ENCODE measurements at regions of chr1 and their contacts with region 1.

Region 1: DNA sequence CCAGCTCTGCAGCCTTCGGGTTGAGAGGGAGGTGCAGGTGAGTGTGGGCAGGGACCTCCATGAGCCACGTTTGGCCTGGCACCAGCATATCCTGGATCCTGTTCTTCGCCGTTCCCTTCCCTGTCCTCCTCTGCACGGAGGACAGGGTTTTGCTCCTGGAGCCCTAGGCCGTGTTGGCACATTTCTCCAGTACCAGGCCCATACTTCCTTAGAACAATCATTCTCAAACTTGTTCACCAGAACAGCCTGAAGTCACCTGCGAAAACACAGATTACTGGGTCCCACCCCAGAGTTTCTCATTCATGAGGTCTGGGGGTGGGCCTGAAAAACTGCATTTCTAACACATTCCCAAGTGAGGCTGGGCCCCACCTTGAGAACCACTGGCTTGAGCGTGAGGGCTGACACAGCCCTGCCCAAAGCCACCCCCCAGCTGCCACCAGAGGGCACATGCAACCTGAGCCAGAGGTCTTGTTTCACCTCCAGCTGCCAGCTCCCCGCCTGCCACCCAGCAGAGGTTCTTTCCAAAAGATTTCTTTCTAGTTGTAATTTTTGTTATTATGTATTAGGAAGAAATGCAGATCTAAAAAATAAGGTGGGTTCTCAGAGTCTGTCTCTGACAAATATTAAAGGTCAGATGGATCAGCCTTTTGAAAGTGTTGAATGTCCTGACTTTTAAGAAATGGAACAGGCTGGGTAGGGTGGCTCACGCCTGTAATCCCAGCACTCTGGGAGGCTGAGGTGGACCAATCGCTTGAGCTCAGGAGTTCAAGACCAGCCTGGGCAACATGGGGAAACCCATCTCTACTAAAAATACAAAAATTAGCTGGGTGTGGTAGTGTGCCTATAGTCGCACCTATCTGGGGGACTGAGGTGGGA is 39.6 kb upstream of the LDLRAP1 start:
- DNase-seq: no peak
- CTCF ChIP-seq: peak; percentile 41

Region 2: GRCh38 chr1:25239681-25240541 is 263.9 kb before region 1 on chr1:
- CTCF ChIA-PET with region 1: no interaction called
- POLR2A ChIA-PET with region 1: interaction called, 10 read pairs
- DNase-seq: peak; percentile 86
- CTCF ChIP-seq: peak; percentile 50

Region 3: GRCh38 chr1:25487628-25488027 is 16.2 kb before region 1 on chr1:
- CTCF ChIA-PET with region 1: interaction called, 29 read pairs
- POLR2A ChIA-PET with region 1: no interaction called
- DNase-seq: peak; percentile 31
- CTCF ChIP-seq: peak; percentile 46

Region 4: GRCh38 chr1:25520446-25521061 is 16.8 kb after region 1 on chr1:
- CTCF ChIA-PET with region 1: interaction called, 32 read pairs
- POLR2A ChIA-PET with region 1: interaction called, 7 read pairs
- DNase-seq: peak; percentile 72
- CTCF ChIP-seq: peak; percentile 75

Region 5: DNA sequence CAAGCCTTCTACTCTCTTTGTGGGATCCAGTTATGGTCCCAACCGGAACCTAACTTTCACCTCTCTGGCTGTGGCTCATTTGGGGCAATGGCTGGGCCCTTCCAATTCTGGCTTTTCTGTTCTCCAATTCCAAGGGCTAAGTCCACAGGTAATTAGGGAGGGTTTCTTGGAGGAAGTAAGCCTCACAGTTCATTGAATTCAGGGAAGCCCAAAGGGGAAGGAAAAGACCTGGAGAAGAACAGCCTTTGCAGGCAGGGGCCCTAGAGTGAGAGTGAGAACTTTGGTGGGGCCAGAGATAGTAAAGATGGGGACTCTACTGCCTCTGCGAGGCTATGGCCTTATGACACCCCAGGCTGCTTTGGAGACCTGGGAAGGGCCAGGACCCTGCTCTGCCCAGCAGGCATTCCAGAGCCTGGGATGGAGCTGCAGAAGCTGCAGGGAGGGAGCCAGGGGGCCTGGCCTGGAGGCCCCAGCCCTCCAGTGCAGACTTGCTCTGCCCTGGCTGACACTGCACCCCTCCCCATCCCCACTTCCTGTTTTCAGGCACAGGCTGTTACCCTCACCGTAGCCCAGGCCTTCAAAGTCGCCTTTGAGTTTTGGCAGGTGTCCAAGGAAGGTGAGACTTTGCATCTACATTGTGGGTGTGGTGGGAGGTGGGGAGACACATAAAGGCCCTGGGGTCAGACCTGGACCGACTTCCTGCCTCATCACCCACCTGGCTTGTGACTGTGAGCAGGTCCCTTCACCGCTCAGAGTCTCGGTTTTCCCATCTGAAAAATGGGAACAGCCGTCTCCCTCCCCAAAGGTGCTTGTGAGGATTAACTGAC is 58.5 kb after region 1 on chr1:
- CTCF ChIA-PET with region 1: no interaction called
- POLR2A ChIA-PET with region 1: no interaction called
- DNase-seq: peak; percentile 87
- CTCF ChIP-seq: no peak

Measured in GM10248 (cell line).